ENCODE measurements at regions of chr4 and their contacts with region 1.

Region 1: DNA sequence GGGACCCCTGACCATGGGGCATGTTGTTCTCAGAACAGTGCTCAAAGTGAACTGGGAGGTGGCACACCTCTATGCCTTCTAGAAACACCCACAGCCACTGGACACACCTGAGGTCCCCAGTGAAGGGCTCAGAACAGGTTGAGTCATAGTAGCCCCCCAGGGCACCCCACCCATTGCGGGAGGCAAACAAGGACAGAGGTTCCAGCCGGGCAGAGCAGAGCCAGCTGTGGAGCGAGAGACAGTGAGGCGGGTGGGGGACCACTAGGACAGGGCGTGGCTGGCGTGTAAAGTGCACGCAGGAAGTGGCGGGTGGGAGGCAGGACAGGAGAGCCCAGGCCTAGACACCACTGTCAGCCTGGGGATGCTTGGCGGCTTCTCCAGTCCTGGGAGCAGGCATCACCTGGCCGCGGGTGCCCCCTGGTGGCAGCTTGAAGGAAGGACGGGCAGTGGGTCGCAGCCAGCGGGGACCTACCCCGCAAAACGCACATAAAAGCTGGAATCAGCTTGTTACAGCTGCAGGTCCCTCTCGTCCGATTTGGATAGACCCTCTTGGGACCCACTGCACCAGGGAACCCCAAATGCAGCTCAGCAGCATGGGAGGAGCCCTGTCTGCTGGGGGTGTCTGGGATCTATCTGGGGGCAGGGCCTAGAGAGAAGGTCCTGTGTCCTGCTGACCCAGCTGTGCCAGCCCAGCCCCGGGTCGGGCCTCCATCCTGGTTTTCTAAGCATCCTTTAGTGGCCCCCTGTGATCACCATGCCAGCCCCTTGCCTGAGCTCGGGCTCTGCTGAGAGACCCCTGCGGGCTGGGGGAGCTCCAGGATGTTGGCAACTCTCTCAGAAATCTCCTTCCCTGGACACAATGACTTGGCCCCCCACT is 57.6 kb downstream of the WFS1 start:
- DNase-seq: peak; percentile 45 to 86 (median 74)
- ATAC-seq: peak; percentile 77
- H3K4me3 ChIP-seq: no peak overlapping the region
- H3K4me3 Mint-ChIP-seq: no peak overlapping the region
- H3K27ac ChIP-seq: no peak overlapping the region
- H3K27ac Mint-ChIP-seq: no peak overlapping the region
- H3K4me1 ChIP-seq: peaks cover 7% of the 10 kb centered on the region
- H3K4me1 Mint-ChIP-seq: no peaks in the 10 kb centered on the region
- H3K27me3 ChIP-seq: peaks cover 12 to 24% of the 10 kb centered on the region in 2 experiments
- H3K27me3 Mint-ChIP-seq: peaks cover 60% of the 10 kb centered on the region
- CTCF ChIP-seq: peak; percentile 89

Region 2: GRCh38 chr4:5998333-5998936 is 328.8 kb before region 1 on chr4:
- CTCF ChIA-PET with region 1: interaction called, 17 read pairs
- POLR2A ChIA-PET with region 1: no interaction called
- intact Hi-C with region 1: loop called (anchors 1 to 2 kb)
- DNase-seq: peak in 10 of 14 experiments; percentile 7 to 66 (median 12)
- ATAC-seq: no peak
- H3K4me3 ChIP-seq: no peak overlapping the region
- H3K4me3 Mint-ChIP-seq: no peak overlapping the region
- H3K27ac ChIP-seq: no peak overlapping the region
- H3K27ac Mint-ChIP-seq: no peak overlapping the region
- H3K4me1 ChIP-seq: no peaks in the 10 kb centered on the region
- H3K4me1 Mint-ChIP-seq: no peaks in the 10 kb centered on the region
- H3K27me3 ChIP-seq: peaks cover 0 to 2% of the 10 kb centered on the region in 2 experiments
- H3K27me3 Mint-ChIP-seq: peaks cover 20% of the 10 kb centered on the region
- CTCF ChIP-seq: peak; percentile 76

Region 3: DNA sequence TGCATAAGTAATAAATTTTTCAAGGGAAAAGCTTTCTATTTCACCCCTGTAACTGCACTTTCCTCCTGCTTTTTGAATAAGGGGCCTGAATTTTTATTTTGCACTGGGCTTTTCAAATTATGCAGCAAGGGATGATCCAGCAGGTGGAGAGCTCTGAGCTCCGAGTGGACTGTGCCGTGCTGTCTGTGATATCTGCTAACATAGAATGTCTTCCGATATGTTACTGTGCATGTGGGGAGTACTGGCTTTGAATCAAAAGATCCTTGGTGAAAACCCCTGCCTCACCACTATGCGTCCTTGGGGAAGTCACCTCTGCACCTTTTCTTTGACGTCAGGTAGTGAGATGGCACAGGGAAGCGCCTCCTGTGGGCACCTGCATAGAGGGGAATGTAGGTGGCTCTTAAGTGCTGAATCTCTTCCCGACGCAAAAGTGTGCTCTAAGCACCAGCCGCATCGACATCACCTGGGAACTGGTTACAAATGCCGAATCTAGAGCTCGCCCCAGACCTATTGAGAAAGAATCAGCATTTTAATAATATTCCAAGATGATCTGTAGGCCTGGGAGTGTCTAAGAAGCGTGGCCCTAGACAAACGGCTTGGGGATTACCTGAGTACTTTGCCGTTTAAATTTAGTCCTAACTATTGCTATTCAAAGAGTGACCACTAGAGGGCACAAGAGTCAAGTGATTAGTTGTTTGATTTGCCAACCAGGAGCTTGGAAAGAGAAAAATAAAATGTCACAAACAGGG is 76.9 kb before region 1 on chr4:
- CTCF ChIA-PET with region 1: interaction called, 56 read pairs
- POLR2A ChIA-PET with region 1: interaction called, 6 read pairs
- intact Hi-C with region 1: loop called (anchors 1 kb)
- DNase-seq: peak in 5 of 14 experiments; percentile 14 to 83 (median 73)
- ATAC-seq: peak; percentile 49
- H3K4me3 ChIP-seq: no peak overlapping the region
- H3K4me3 Mint-ChIP-seq: no peak overlapping the region
- H3K27ac ChIP-seq: no peak overlapping the region
- H3K27ac Mint-ChIP-seq: no peak overlapping the region
- H3K4me1 ChIP-seq: peaks cover 4% of the 10 kb centered on the region
- H3K4me1 Mint-ChIP-seq: no peaks in the 10 kb centered on the region
- H3K27me3 ChIP-seq: peaks cover 25 to 37% of the 10 kb centered on the region in 2 experiments
- H3K27me3 Mint-ChIP-seq: peaks cover 52% of the 10 kb centered on the region
- CTCF ChIP-seq: peak; percentile 90

Region 4: GRCh38 chr4:6461301-6462165 is 134.3 kb after region 1 on chr4:
- CTCF ChIA-PET with region 1: no interaction called
- POLR2A ChIA-PET with region 1: no interaction called
- intact Hi-C with region 1: no loop called
- DNase-seq: no peak
- ATAC-seq: no peak
- H3K4me3 ChIP-seq: no peak overlapping the region
- H3K4me3 Mint-ChIP-seq: no peak overlapping the region
- H3K27ac ChIP-seq: no peak overlapping the region
- H3K27ac Mint-ChIP-seq: no peak overlapping the region
- H3K4me1 ChIP-seq: no peaks in the 10 kb centered on the region
- H3K4me1 Mint-ChIP-seq: no peaks in the 10 kb centered on the region
- H3K27me3 ChIP-seq: peaks cover 4 to 16% of the 10 kb centered on the region in 2 experiments
- H3K27me3 Mint-ChIP-seq: peaks cover 67% of the 10 kb centered on the region
- CTCF ChIP-seq: no peak